HepG2 (cell line): ENCODE measurements at regions of chr15 and their contacts with region 1.

Region 1: DNA sequence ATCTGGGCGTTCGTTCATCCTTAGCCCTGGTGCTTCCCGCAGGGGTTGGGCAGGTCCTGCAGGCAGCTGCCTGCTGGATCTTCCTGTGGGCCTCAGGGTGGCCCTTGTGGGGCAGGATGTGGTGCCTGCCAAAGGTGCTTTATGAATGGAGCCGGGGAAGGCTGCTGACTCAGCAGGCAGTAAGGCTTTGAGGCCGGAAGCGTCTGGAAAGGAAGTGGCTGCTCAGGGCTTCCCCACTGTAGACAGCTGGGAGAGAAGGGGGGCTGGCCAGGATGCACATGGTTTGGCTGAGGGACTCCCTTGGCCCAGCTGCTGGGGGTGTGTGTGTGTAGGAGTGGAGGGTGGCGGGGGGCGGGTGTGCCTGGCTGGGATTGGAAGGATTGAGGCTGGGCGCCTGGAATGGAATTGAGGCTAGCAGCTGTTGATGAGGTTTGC is 12.9 kb downstream of the CD276 start:
- DNase-seq: no peak
- ATAC-seq: no peak
- H3K4me3 ChIP-seq: no peak overlapping the region
- H3K27ac ChIP-seq: no peak overlapping the region
- H3K4me1 ChIP-seq: peaks cover 22% of the 10 kb centered on the region
- H3K27me3 ChIP-seq: no peaks in the 10 kb centered on the region
- CTCF ChIP-seq: no peak
- EP300 ChIP-seq: no peak
- POLR2A ChIP-seq: no peak
- RAD21 ChIP-seq: no peak

Region 2: DNA sequence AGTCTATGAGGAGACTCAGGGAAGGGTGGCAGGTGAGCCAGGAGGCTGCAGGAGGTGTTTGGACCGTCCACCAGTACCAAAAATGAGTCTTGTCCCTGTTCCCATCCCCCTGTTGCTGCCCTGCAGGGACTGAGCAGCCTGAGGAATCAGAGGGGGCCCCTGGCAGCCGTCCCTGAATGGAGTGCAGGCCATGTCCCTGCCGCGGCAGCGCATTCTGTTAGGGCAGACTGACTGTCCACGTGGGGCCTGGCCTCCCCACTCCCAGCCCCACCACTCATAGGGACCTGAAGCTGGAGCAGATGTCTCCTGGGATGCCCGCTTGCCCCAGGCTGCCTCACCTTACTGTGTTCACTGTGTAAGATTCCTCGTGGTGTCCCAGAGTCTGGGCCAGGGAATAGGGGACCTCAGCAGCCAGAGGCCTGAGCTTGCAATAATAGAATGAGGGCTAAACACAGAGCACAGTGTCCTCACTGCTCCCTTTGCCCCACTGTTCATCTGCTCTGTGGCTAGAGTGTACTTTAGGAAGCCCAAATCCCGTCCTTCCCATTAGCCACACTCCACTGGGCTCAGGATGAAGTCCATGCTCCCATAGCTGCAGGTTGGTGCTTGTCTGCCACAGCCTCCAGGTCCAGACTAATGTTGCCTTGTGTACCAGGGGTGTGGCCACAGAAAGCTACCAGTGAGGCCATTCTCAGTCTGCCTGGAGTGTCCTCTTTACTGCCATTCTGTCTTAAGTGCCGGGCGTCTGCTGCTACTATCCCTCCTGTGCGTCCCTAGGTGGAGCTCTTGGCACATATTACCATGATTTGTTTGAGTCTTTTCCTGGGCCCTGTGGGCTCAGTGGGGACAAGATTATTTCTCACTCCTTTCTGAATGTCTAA is 391.5 kb before region 1 on chr15:
- CTCF ChIA-PET with region 1: interaction called, 3 read pairs
- POLR2A ChIA-PET with region 1: no interaction called
- in situ Hi-C with region 1: loop called (anchors 10 kb)
- intact Hi-C with region 1: no loop called
- DNase-seq: peak; percentile 57
- ATAC-seq: peak; percentile 92
- H3K4me3 ChIP-seq: no peak overlapping the region
- H3K27ac ChIP-seq: no peak overlapping the region
- H3K4me1 ChIP-seq: no peaks in the 10 kb centered on the region
- H3K27me3 ChIP-seq: no peaks in the 10 kb centered on the region
- CTCF ChIP-seq: peak; percentile 81
- EP300 ChIP-seq: no peak
- POLR2A ChIP-seq: no peak
- RAD21 ChIP-seq: peak; percentile 62; the same call in 1 of the 2 replicates

Region 3: GRCh38 chr15:73560501-73561117 is 136.4 kb before region 1 on chr15:
- CTCF ChIA-PET with region 1: interaction called, 11 read pairs
- POLR2A ChIA-PET with region 1: no interaction called
- in situ Hi-C with region 1: loop called (anchors 5 kb)
- intact Hi-C with region 1: loop called (anchors 1 kb)
- DNase-seq: peak; percentile 61
- ATAC-seq: peak; percentile 44; the same call in 2 of the 3 replicates
- H3K4me3 ChIP-seq: no peak overlapping the region
- H3K27ac ChIP-seq: no peak overlapping the region
- H3K4me1 ChIP-seq: no peaks in the 10 kb centered on the region
- H3K27me3 ChIP-seq: no peaks in the 10 kb centered on the region
- CTCF ChIP-seq: peak; percentile 43
- EP300 ChIP-seq: no peak
- POLR2A ChIP-seq: no peak
- RAD21 ChIP-seq: no peak

Region 4: DNA sequence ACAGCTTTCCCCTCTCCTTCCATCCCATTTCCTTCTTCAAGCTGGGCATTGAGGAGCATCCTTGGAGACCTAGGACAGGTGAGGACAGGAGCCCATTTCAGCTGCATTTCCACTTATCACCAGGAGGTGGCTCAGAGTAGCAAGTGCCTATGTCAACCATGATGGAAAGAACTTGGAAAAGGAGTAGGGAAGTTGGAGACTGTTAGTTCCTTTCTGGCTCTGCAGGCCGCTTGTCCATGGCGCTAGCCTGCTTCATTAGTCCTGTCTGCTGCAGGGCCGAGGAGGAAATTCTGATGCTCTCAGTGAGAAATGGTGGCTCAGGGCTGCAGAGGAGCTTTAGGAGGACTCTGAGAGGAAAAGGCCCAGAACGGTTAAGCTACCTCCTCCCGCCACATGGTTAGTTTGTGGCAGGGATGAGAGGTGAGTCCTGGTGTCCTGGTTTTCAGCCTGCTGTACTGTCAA is 19.9 kb before region 1 on chr15:
- CTCF ChIA-PET with region 1: interaction called, 69 read pairs
- POLR2A ChIA-PET with region 1: no interaction called
- in situ Hi-C with region 1: no loop called
- intact Hi-C with region 1: loop called (anchors 1 kb)
- DNase-seq: peak; percentile 65
- ATAC-seq: peak; percentile 92
- H3K4me3 ChIP-seq: no peak overlapping the region
- H3K27ac ChIP-seq: no peak overlapping the region
- H3K4me1 ChIP-seq: peaks cover 3% of the 10 kb centered on the region; the same call in 1 of the 2 replicates
- H3K27me3 ChIP-seq: peaks cover 0 to 33% of the 10 kb centered on the region in 2 experiments; a peak in 3 of 5 replicates
- CTCF ChIP-seq: peak; percentile 88
- EP300 ChIP-seq: no peak
- POLR2A ChIP-seq: no peak
- RAD21 ChIP-seq: peak; percentile 53; the same call in 1 of the 2 replicates

Region 5: DNA sequence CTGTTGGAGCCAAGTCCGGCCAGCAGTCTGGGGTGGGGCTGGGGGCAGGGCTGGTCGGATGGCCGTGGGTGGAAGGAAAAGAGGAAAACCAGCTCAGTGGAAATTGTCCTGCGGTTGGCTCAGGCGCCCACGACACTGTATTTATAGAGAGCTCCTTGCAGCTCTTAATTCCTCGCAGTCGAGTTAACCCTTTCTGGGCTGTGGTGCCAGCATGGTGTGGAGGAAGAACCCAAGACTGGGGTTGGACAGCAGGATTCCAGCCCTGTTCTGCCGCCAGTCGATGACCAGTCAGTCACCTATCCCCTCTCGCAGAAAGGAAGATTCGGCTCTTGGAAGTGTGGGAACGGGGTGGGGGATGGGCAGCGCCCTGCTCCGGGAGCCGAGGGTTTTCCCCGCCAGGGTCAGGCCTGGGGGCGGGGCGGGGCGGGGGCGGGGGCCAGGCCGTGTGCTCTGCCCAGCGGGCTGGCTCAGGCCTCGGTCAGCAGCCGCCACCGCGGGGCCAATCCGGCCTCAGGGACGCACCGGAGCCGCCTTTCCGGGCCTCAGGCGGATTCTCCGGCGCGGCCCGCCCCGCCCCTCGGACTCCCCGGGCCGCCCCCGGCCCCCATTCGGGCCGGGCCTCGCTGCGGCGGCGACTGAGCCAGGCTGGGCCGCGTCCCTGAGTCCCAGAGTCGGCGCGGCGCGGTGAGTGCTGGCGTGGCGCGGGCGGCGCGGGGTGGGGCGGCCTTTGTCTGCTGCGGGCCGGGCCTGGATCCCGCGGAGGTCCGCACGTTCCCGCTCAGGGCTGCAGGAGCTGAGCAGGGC is 13.1 kb before region 1 on chr15 and contains the start of gene CD276:
- CTCF ChIA-PET with region 1: interaction called, 69 read pairs
- POLR2A ChIA-PET with region 1: interaction called, 8 read pairs
- in situ Hi-C with region 1: no loop called
- intact Hi-C with region 1: no loop called
- DNase-seq: peak; percentile 61
- ATAC-seq: peak; percentile 88
- H3K4me3 ChIP-seq: peak within 1 kb of the TSS; percentile 92 to 97 (median 94)
- H3K27ac ChIP-seq: peak within 1 kb of the TSS; percentile 84
- H3K4me1 ChIP-seq: peaks cover 57% of the 10 kb centered on the region
- H3K27me3 ChIP-seq: peaks cover 2 to 12% of the 10 kb centered on the region in 2 experiments; a peak in 2 of 5 replicates
- CTCF ChIP-seq: no peak; the same call in 1 of the 2 replicates
- EP300 ChIP-seq: no peak
- POLR2A ChIP-seq: peak; percentile 35 to 69; a peak in 2 of 4 replicates
- RAD21 ChIP-seq: no peak; the same call in 1 of the 2 replicates
- total RNA-seq, gene CD276: 32.4 and 55.2 TPM in 2 replicates

Region 6: GRCh38 chr15:73781038-73781925 is 84.2 kb after region 1 on chr15:
- CTCF ChIA-PET with region 1: no interaction called
- POLR2A ChIA-PET with region 1: no interaction called
- in situ Hi-C with region 1: no loop called
- intact Hi-C with region 1: no loop called
- DNase-seq: no peak
- ATAC-seq: peak; percentile 38; the same call in 2 of the 3 replicates
- H3K4me3 ChIP-seq: no peak overlapping the region
- H3K27ac ChIP-seq: no peak overlapping the region
- H3K4me1 ChIP-seq: peaks cover 15% of the 10 kb centered on the region; the same call in 1 of the 2 replicates
- H3K27me3 ChIP-seq: peaks cover 1 to 6% of the 10 kb centered on the region in 2 experiments; a peak in 1 of 5 replicates
- CTCF ChIP-seq: peak; percentile 54
- EP300 ChIP-seq: no peak
- POLR2A ChIP-seq: no peak
- RAD21 ChIP-seq: no peak